HEK293 (cell line): ENCODE measurements at regions of chr1 and their contacts with region 1.

Region 1: GRCh38 chr1:23634842-23635651 is 56.6 kb upstream of the RPL11 start:
- H3K4me3 ChIP-seq: peak overlapping the region; percentile 15
- H3K27ac ChIP-seq: no peak overlapping the region
- H3K4me1 ChIP-seq: no peaks in the 10 kb centered on the region
- CTCF ChIP-seq: peak; percentile 75

Region 2: GRCh38 chr1:23460519-23460918 is 174.5 kb before region 1 on chr1:
- CTCF ChIA-PET with region 1: no interaction called
- POLR2A ChIA-PET with region 1: no interaction called
- H3K4me3 ChIP-seq: no peak overlapping the region
- H3K27ac ChIP-seq: no peak overlapping the region
- H3K4me1 ChIP-seq: no peaks in the 10 kb centered on the region
- CTCF ChIP-seq: no peak

Region 3: DNA sequence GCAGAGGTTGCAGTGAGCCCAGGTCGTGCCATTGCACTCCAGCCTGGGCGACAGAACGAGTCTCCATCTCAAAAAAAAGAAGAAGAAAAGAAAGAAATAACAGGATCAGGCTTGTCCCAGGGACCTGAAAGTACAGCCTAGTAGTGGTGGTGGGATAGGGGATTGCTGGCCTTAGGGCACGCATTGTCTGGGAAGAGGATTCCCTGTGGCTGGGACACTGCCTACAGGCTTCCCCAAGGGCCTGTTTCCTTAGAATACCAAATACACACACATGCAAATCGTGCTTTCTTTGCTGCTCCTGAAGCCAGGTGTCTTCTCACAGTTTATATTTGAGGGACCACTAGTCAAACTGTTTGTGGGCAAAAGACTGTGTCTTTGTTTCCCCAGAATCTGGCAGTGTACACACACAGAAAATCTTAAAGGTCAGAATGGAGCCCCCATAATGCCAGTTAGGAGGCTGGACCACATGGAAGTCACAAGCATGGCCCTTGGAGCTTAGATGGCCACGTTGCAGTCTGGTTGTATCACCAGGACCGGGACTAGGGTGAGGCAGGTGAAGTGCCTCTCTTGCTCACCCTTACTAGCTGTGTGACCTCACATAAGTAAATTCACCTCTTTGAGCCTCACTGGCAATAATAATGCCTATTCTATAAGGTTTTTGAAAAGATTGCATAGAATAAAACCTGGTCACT is 138.4 kb before region 1 on chr1:
- CTCF ChIA-PET with region 1: interaction called, 29 read pairs
- POLR2A ChIA-PET with region 1: no interaction called
- H3K4me3 ChIP-seq: no peak overlapping the region
- H3K27ac ChIP-seq: no peak overlapping the region
- H3K4me1 ChIP-seq: no peaks in the 10 kb centered on the region
- CTCF ChIP-seq: no peak

Region 4: DNA sequence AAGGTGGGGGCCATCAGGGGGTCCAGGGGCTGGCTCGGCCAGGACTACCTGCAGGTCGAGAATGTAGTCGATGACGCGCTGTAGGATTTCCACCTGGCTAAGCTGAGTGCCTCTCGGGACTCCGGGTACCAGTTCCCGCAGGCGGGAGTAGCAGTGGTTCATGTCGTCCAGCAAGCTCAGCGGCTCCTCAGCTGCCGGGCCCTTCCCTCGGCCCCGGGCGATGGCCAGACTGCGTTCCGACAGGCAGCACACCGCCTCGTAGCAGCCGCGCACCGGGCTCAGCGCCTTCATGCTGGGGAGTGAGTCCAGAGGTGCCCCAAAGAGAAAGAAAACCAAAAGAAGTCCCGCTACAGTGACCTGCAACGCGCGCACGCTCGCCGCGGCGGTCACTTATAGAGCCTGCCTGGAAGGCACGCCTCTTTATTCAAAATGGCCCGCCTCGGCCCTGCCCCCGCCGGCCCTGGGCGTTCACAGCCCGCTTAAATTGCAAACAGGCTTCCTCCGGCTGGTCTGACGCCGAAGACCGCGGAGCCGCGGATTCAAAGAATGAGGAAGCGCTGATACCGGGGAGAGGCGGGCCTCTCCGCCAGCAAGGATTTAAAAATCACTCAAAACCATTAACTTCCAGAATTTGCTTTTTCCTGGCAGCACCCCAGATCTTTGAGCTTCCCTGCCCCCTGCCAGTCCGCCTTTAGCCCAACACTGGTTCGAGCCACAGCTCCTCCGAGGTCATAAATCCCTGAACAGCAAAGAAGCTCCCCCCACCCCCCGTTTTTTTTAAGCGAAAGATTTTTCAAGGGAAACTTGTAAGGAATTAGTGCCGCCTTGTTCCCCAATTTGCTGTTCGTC is 75.7 kb before region 1 on chr1 and contains the start of gene ID3:
- CTCF ChIA-PET with region 1: interaction called, 506 read pairs
- POLR2A ChIA-PET with region 1: interaction called, 60 read pairs
- H3K4me3 ChIP-seq: peak within 1 kb of the TSS; percentile 68
- H3K27ac ChIP-seq: peak within 1 kb of the TSS; percentile 97
- H3K4me1 ChIP-seq: peaks cover 37% of the 10 kb centered on the region
- CTCF ChIP-seq: no peak

Region 5: GRCh38 chr1:23591460-23592208 is 43.4 kb before region 1 on chr1:
- CTCF ChIA-PET with region 1: interaction called, 23 read pairs
- POLR2A ChIA-PET with region 1: interaction called, 3 read pairs
- H3K4me3 ChIP-seq: no peak overlapping the region
- H3K27ac ChIP-seq: no peak overlapping the region
- H3K4me1 ChIP-seq: no peaks in the 10 kb centered on the region
- CTCF ChIP-seq: no peak

Region 6: DNA sequence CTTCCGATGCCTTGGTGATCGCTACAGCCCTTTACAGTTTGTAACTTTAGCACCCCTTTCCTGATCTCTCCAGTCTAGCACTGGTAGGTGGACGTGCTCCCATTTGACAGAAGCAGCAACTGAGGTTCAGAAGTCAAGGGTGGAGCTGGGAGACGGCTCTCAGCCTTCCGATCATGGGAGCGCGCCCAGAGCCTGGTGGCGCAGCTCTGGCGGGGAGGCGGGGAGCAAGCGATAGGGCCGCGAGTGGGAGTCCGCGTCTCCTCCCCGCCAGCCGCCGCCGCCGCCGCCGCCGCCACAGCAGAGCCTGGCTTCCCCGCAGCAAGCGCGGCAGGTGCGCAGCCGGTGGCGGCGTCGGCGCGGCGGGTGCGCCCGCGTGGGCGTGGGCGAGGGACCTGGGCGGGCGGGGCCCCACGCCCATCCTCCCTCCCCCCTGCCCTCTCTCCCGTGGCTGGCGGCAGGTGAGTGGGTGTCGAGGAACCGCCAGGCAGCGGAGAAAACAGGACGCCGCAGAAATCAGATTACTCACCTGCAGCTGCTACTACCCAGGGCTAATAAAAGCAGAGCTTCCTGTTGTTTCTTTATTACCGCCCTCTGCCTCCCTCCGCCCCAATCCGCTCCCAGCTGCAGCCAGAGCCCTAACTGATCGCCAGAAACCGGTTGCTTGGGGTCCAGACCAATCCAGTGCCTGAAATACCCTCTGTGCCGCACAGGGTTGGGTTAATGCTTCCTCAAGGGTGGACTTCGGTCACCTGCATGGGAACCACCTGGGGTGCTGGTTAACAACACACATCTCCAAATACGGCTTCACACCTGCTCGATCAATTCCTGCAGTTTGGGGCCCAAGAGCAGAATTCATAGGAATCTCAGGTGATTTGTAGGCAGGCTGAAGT is 15.5 kb before region 1 on chr1:
- CTCF ChIA-PET with region 1: interaction called, 15 read pairs
- POLR2A ChIA-PET with region 1: no interaction called
- H3K4me3 ChIP-seq: peak overlapping the region; percentile 22
- H3K27ac ChIP-seq: no peak overlapping the region
- H3K4me1 ChIP-seq: no peaks in the 10 kb centered on the region
- CTCF ChIP-seq: no peak

Region 7: DNA sequence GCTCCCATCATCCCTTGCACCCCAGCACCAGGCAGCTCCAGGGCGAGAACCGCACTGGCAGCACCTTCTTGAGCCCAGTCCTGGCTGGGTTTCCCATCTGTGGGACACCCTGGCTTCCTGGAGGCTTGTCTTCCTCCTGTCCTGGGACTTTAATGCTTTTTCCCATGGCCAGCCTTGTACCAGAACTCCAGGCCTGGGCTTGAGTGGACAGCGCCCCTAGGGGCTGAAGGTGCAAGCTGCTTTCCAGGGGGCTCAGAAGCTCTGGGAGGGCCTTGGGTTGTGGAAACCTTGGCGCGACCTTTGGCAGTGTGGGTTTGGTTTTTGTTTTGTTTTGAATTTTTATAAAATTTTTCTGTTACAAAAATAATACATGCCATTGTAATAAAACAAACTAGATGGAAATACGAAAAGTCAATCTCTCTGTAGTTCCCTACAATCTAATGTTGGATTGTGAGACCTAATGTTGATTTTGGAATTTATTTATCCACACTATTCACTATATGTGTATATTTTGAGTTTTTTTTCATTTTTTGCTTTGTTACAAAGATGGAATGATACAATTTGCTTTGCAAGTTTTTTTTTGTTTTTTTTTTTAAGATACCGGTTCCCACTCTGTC is 22.7 kb after region 1 on chr1:
- CTCF ChIA-PET with region 1: interaction called, 64 read pairs
- POLR2A ChIA-PET with region 1: interaction called, 3 read pairs
- H3K4me3 ChIP-seq: no peak overlapping the region
- H3K27ac ChIP-seq: no peak overlapping the region
- H3K4me1 ChIP-seq: no peaks in the 10 kb centered on the region
- CTCF ChIP-seq: peak; percentile 60